Posterior cingulate gyrus (tissue), 11 donors: ENCODE measurements at regions of chr2 and their contacts with region 1.

Region 1: DNA sequence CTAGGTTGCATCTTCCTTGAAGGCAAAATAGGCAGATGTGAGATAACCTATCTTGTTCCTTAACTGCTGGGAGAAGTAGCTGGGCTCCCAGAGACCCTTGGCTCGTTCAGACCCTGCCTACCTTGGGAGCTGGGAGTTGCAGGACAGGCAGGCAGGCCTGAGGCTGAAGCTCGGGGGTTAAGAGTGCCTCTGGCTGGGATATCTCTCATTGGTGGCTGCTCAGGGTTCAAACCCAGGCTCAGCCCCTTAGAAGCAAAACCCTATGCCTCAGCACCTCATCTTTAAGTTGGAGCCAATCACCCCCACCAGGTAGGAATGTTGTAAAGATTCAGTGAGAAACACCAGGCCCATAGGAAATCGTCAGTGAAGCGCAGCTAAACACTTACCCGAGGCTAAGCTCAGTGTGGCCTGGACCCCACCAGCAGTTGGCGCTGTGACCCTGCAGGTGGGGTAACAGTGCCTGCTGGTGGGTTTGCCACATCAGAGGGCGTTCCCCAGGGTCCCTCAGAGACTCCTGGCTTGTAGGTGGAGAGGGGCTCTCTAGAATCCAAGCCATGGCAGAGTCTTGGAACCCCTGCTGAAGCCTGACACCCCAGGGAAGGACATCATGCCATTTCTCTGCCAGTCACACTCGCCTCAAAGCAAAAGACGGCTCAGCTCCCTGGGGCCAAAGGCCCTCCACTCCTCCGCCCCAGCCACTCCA is 54.6 kb upstream of the GPR17 start:
- DNase-seq: peak in 7 of 10 donors; percentile 37 to 93 (median 64)

Region 2: DNA sequence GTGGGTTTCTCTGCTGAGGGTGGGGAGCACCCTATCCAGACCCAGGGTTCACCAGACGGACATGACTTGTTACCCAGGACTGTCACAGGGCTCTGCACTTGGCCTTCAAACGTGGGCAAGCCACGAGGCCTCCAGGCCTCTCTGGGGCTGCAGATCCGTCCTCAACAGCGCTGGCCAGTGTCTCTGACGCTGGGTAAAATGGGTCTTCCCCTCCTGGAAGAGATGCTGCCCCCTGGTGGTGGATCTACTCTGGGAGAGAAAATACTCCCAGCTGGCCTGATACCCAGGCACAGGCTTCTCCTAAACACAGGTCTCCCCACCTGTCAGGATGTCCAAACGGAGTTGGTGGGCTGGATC is 58.3 kb after region 1 on chr2:
- intact Hi-C with region 1: loop called (anchors 1 kb)
- DNase-seq: peak in 8 of 10 donors; percentile 70 to 95 (median 84)